PC-3 (cell line): ENCODE measurements at regions of chr22 and their contacts with region 1.

Region 1: GRCh38 chr22:24758164-24758799 is 16.2 kb downstream of the PIWIL3 start:
- DNase-seq: peak; percentile 68
- ATAC-seq: no peak
- H3K4me3 ChIP-seq: no peak overlapping the region
- H3K27ac ChIP-seq: no peak overlapping the region
- H3K4me1 ChIP-seq: no peaks in the 10 kb centered on the region
- H3K27me3 ChIP-seq: peaks cover 32% of the 10 kb centered on the region
- CTCF ChIP-seq: peak; percentile 87

Region 2: DNA sequence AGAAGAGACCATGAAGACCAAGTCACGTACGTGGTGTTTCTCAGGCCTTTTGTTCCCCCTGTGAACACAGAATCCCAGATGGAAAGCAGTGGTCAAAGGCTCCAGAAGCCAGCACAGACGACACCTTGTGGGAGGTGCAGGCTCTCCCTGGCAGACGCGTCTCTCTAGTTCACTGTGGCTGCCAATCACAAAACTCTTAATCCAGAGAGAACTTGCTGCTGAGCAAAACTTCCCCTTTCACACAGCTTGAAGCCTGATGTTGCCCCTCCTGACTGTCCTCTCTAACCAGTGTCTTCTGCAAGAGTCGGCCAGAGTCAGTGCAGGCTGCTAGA is 50.8 kb before region 1 on chr22:
- CTCF ChIA-PET with region 1: no interaction called
- POLR2A ChIA-PET with region 1: no interaction called
- intact Hi-C with region 1: loop called (anchors 2 kb)
- DNase-seq: no peak
- ATAC-seq: no peak
- H3K4me3 ChIP-seq: no peak overlapping the region
- H3K27ac ChIP-seq: no peak overlapping the region
- H3K4me1 ChIP-seq: no peaks in the 10 kb centered on the region
- H3K27me3 ChIP-seq: peaks cover 16% of the 10 kb centered on the region
- CTCF ChIP-seq: no peak

Region 3: DNA sequence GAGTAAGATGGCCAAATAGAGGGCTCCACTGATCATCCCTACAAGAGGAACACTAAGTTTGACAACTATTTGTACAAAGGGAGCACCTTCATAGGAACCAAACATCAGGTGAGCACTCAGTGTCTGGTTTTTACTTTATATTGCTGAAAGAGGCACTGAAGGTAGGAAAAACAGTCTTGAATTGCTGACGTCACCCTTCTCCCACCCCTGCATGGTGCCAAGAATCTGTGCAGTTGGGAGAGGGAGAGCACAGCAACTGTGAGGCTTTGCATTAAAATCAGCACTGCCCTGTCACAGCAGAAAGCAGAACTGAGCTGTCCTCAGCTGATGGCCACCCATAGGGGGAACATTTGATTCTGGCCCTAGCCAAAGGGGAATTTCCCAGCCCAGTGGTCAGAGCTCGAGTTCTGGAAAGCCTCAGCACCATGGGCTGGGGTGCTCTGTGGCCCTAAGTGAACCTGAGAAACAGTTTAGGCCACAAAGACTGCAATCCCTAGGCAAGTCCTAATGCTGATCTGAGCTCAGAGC is 21.7 kb before region 1 on chr22:
- CTCF ChIA-PET with region 1: no interaction called
- POLR2A ChIA-PET with region 1: no interaction called
- intact Hi-C with region 1: no loop called
- DNase-seq: no peak
- ATAC-seq: no peak
- H3K4me3 ChIP-seq: no peak overlapping the region
- H3K27ac ChIP-seq: no peak overlapping the region
- H3K4me1 ChIP-seq: no peaks in the 10 kb centered on the region
- H3K27me3 ChIP-seq: peaks cover 13% of the 10 kb centered on the region
- CTCF ChIP-seq: no peak